ENCODE measurements at regions of chr16 and their contacts with region 1.

Region 1: DNA sequence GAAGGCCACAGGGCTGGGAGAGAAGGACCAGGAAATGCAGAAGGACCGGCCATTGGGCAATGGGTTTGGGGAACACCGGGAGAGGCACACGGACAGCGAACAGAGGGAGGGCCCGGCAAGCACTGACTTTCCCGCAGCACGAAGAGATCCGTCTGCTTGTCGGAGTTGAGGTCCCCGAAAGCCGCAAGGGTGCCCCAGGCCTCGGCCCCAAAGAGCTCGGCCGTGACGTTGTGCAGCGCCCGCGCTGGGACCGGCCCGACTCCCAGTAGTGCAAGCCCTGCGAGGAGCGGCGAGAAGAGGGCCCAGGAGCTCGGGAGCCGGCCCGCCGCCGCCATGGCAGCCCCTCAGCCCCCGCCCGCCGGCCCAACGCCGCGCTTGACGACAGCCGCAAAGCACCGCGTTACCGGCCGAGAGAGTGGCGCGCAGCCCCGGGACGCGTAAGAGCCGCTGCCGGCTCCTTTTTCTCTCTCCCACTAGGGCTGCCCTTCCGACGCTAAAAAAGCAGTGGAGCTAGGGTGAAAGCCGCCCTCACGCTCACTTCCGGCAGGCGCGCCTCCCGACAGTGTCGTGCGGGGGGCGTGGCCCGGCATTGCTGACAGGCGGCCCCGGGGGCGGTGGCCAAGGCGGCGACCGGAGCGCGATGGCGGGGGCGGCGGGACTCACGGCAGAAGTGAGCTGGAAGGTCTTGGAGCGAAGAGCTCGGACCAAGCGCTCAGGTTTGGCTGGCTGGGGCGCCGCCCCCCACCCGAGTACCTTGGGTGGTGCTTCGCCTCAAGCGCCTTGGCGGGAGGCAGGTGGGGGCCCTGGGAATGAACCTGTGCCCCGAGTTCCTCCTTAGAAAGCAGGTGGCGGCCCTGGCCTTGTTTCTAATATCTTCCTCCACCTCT is at the starts of genes ITFG1 and PHKB:
- DNase-seq: peak; percentile 88 to 95 (median 90)
- ATAC-seq: peak; percentile 76
- H3K4me3 ChIP-seq: peak within 1 kb of the TSS; percentile 56
- H3K27ac ChIP-seq: peak within 1 kb of the TSS; percentile 99
- H3K4me1 ChIP-seq: peaks cover 0 to 19% of the 10 kb centered on the region in 2 experiments; a peak in 3 of 5 replicates
- H3K27me3 ChIP-seq: no peaks in the 10 kb centered on the region
- CTCF ChIP-seq: peak in 1 of 3 experiments; percentile 23; a peak in 2 of 6 replicates
- EP300 ChIP-seq: peak; percentile 30; the same call in 1 of the 2 replicates
- POLR2A ChIP-seq: peak; percentile 91
- RAD21 ChIP-seq: peak in 1 of 2 experiments; percentile 33; a peak in 1 of 4 replicates
- polyA plus RNA-seq, gene ITFG1: 17.1 to 21.9 TPM
- polyA plus RNA-seq, gene PHKB: 24.7 to 44.3 TPM

Region 2: DNA sequence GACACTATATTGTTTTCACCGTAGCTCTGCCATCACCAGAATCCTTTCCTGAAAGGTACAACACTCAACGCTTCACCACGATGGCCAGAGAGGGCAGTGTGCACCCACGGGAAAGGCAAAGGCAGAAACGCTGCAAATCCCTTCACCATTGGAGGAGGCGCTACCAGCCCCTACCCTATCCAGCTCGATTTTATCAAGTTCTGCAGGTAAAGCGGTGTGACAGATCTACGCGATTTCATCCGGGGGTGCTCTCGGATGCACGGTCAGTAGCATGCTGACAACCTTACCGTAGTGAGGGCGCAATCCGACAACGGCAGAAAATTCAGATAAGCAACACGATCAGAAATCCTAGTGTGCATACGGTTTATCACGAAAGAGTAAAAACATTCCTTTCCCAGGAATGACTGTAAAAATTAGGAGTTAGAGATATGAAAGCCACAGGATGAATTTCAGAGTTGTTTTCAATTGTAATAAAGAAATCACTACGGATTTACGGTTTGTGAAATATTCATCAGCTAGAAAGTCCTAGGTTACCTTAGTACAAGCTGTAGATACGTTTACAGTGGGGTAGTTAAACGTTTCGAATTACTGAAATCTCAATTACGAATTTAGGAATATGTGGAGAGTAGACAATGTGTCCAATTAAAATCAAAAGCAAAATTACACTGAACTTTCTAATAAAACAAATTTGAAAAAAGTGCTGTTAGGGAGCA is 319.0 kb before region 1 on chr16:
- CTCF ChIA-PET with region 1: no interaction called
- POLR2A ChIA-PET with region 1: interaction called, 6 read pairs
- in situ Hi-C with region 1: no loop called
- intact Hi-C with region 1: loop called (anchors 5 kb)
- DNase-seq: peak; percentile 59 to 90 (median 70)
- ATAC-seq: peak; percentile 84
- H3K4me3 ChIP-seq: peak overlapping the region; percentile 64
- H3K27ac ChIP-seq: peak overlapping the region; percentile 81; the same call in 1 of the 3 replicates
- H3K4me1 ChIP-seq: peaks cover 8 to 21% of the 10 kb centered on the region in 2 experiments; a peak in 4 of 5 replicates
- H3K27me3 ChIP-seq: no peaks in the 10 kb centered on the region
- CTCF ChIP-seq: peak; percentile 98
- EP300 ChIP-seq: no peak
- POLR2A ChIP-seq: no peak
- RAD21 ChIP-seq: peak; percentile 72 to 81

Region 3: DNA sequence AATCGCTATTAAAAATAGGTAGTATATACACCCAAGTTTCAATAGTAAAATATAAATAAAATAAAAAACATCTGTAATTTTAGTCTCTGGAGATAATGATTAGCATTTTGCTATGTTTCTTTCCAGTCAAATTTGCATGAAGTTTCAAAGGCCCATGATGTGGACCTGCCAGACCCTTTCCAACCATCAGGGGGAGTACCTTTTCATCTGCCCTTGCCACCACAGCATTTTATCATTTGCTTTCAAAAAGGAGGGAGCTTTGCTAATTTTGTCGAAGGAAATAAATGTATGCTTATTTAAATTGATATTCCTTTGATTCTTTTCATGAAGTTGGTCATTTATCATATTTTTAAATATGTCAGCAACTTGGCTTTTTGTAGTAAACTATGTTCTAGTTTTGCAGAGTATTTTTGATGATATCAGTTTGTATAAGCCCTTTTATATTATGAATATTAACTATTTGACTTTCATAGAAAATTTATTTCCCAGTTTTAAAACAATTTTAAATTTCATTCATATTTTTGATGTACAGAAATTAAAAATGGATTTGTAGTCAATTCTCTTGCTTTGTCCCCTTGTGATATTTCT is 202.0 kb before region 1 on chr16:
- CTCF ChIA-PET with region 1: no interaction called
- POLR2A ChIA-PET with region 1: no interaction called
- in situ Hi-C with region 1: no loop called
- intact Hi-C with region 1: loop called (anchors 10 kb)
- DNase-seq: peak; percentile 52 to 61 (median 56)
- ATAC-seq: peak; percentile 86
- H3K4me3 ChIP-seq: no peak overlapping the region
- H3K27ac ChIP-seq: no peak overlapping the region
- H3K4me1 ChIP-seq: no peaks in the 10 kb centered on the region
- H3K27me3 ChIP-seq: no peaks in the 10 kb centered on the region
- CTCF ChIP-seq: peak; percentile 57 to 74 (median 73)
- EP300 ChIP-seq: no peak
- POLR2A ChIP-seq: no peak
- RAD21 ChIP-seq: peak; percentile 31 to 60

Region 4: GRCh38 chr16:47392081-47392480 is 68.9 kb before region 1 on chr16:
- CTCF ChIA-PET with region 1: no interaction called
- POLR2A ChIA-PET with region 1: no interaction called
- in situ Hi-C with region 1: no loop called
- intact Hi-C with region 1: loop called (anchors 2 kb)
- DNase-seq: peak in 3 of 4 experiments; percentile 10 to 86 (median 50)
- ATAC-seq: peak; percentile 93
- H3K4me3 ChIP-seq: no peak overlapping the region; the same call in 1 of the 2 replicates
- H3K27ac ChIP-seq: peak overlapping the region; percentile 67
- H3K4me1 ChIP-seq: peaks cover 0 to 40% of the 10 kb centered on the region in 2 experiments; a peak in 4 of 5 replicates
- H3K27me3 ChIP-seq: no peaks in the 10 kb centered on the region
- CTCF ChIP-seq: no peak
- EP300 ChIP-seq: peak; percentile 55; the same call in 1 of the 2 replicates
- POLR2A ChIP-seq: no peak
- RAD21 ChIP-seq: peak in 1 of 2 experiments; percentile 29; a peak in 2 of 4 replicates

Region 5: GRCh38 chr16:47448830-47449575 is 12.0 kb before region 1 on chr16:
- CTCF ChIA-PET with region 1: no interaction called
- POLR2A ChIA-PET with region 1: interaction called, 21 read pairs
- in situ Hi-C with region 1: no loop called
- intact Hi-C with region 1: no loop called
- DNase-seq: peak; percentile 21 to 50 (median 46)
- ATAC-seq: peak; percentile 61
- H3K4me3 ChIP-seq: no peak overlapping the region
- H3K27ac ChIP-seq: no peak overlapping the region
- H3K4me1 ChIP-seq: peaks cover 0 to 9% of the 10 kb centered on the region in 2 experiments; a peak in 2 of 5 replicates
- H3K27me3 ChIP-seq: no peaks in the 10 kb centered on the region
- CTCF ChIP-seq: no peak
- EP300 ChIP-seq: peak; percentile 49
- POLR2A ChIP-seq: no peak
- RAD21 ChIP-seq: no peak

Region 6: GRCh38 chr16:47492428-47493377 is 31.7 kb after region 1 on chr16:
- CTCF ChIA-PET with region 1: no interaction called
- POLR2A ChIA-PET with region 1: interaction called, 3 read pairs
- in situ Hi-C with region 1: no loop called
- intact Hi-C with region 1: loop called (anchors 2 kb)
- DNase-seq: peak; percentile 57 to 92 (median 72)
- ATAC-seq: peak; percentile 100
- H3K4me3 ChIP-seq: no peak overlapping the region
- H3K27ac ChIP-seq: peak overlapping the region; percentile 86
- H3K4me1 ChIP-seq: peaks cover 4 to 30% of the 10 kb centered on the region in 2 experiments
- H3K27me3 ChIP-seq: no peaks in the 10 kb centered on the region
- CTCF ChIP-seq: 0 out of 6 replicates have a peak, but pooled peaks of 1 of the 3 experiments have one; percentile 10
- EP300 ChIP-seq: peak; percentile 56; the same call in 1 of the 2 replicates
- POLR2A ChIP-seq: peak; percentile 51
- RAD21 ChIP-seq: peak in 1 of 2 experiments; percentile 35; a peak in 1 of 4 replicates

Region 7: DNA sequence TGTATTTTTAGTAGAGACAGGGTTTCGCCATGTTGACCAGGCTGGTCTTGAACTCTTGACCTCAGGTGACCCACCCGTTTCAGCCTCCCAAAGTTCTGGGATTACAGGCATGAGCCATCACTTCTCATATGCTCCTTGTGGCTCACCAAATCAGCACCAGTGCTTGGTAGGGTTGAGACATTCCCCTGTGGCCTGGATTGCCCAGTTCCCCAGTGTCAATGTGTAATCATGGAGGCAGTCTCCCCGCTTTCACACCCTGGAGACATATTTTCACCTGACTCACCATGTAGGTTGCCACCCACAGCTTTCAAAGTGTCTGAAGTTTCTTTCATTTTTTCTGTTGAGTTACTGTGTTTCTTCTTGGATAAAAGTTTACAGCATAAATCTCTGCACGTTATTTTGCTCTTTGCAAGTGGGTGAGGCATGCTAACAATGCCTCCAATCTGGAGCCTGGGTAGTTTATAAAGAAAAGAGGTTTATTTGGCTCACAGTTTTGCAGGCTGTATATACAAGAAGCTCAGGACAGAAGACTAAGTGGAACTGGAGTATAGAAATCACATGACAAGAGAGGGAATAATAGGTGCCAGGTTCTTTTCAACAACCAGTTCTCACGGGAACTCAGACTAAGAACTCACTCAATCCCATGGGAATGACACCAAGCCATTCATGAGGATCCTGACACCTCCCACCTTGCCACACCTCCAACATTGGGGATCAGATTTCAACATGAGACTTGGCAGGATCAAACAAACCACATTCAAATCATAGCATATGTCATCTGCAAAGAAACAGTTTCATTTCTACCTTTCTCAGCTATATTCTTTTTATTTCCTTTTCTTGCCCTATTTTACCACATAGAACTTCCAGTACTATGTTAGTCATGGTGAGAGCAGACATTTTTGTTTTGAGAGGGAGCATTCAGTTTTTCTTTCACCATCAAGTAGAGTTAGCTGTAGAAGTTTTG is 113.4 kb after region 1 on chr16:
- CTCF ChIA-PET with region 1: no interaction called
- POLR2A ChIA-PET with region 1: no interaction called
- in situ Hi-C with region 1: no loop called
- intact Hi-C with region 1: loop called (anchors 10 kb)
- DNase-seq: no peak
- ATAC-seq: no peak
- H3K4me3 ChIP-seq: no peak overlapping the region
- H3K27ac ChIP-seq: no peak overlapping the region
- H3K4me1 ChIP-seq: peaks cover 5 to 9% of the 10 kb centered on the region in 2 experiments; a peak in 2 of 5 replicates
- H3K27me3 ChIP-seq: no peaks in the 10 kb centered on the region
- CTCF ChIP-seq: no peak
- EP300 ChIP-seq: no peak
- POLR2A ChIP-seq: 0 out of 2 replicates have a peak, but pooled peaks have one; percentile 36
- RAD21 ChIP-seq: no peak